ENCODE measurements at regions of chr4 and their contacts with region 1.

Region 1: DNA sequence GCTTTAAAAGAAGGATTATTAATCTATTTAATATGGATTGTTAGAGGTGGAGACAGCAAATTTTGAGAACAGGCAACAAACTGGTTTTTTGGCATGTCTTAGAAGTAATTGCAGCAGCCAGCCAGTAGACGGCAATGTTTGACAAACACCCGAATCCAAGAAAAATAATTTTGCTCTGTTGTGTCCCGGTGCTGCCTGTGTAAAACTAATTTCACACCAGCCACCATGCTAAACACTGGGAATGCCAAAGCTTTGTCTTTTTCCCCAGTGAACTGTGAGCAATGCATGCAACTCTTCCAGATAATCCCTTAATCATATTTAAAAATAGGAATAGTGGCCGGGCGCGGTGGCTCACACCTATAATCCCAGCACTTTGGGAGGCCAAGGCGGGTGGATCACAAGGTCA is 25.9 kb downstream of the SMIM31 start:
- DNase-seq: no peak
- ATAC-seq: no peak

Region 2: DNA sequence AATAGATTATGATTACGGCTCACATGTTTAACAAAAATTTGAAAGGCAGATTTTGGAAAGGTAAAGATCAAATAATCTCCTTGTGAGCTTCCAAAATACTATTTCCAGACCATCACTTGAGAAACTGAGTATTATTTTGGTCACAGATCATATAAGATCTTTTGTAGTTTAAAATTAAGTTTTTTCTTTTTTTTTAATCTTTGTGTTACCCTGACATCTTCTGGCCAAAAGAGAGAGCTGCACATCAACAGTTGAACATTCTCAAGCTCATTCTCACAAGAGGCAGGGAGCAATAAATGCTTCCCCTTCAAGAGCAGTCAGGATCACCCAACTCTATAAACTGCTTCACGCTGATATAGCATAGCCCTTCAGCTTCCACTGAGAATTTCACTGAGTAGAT is 317.0 kb after region 1 on chr4:
- intact Hi-C with region 1: loop called in 1 of 2 experiments (anchors 10 kb)
- DNase-seq: no peak
- ATAC-seq: no peak